ENCODE measurements at regions of chr6 and their contacts with region 1.

Region 1: GRCh38 chr6:82363351-82364086 is at the start of gene TPBG:
- DNase-seq: peak; percentile 66 to 68
- H3K4me3 ChIP-seq: peak within 1 kb of the TSS; percentile 62
- H3K4me3 Mint-ChIP-seq: peak within 1 kb of the TSS; percentile 85
- H3K27ac Mint-ChIP-seq: peak within 1 kb of the TSS; percentile 54
- H3K4me1 ChIP-seq: no peaks in the 10 kb centered on the region; the same call in 1 of the 2 replicates
- H3K4me1 Mint-ChIP-seq: peaks cover 8% of the 10 kb centered on the region
- H3K27me3 ChIP-seq: no peaks in the 10 kb centered on the region; the same call in 1 of the 2 replicates
- H3K27me3 Mint-ChIP-seq: peaks cover 23% of the 10 kb centered on the region
- CTCF ChIP-seq: peak in 1 of 2 experiments; percentile 45
- total RNA-seq, gene TPBG: 4.0 and 4.3 TPM in 2 replicates

Region 2: DNA sequence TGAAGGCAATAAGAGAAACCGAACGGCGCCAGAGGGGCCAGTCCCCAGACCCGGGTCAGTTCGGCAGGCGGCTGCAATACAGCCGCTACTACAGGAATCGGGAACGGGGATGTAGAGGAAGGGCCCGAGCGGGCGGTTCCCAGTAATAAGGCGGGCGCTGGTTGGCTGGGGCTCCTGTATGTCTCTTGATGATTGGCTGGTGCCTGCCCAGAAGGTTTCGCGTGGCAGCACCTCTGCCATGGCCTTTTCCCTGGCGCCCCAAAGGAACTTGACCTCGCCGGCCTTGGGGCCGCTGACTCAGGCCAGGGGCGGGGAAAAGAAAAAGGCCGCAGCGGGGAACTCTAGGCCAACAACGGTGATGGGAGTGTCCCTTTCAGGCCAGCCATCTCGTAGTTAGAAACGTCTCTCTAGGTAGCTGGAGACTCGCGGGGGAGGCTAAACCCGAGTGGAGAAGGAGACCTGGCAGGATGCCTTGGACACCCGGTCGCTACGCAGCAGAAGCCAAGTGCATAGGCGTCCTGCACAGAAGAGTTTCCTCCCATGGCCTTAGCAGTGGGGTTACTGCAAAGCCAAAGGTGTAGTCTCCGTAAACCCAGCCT is 115.8 kb before region 1 on chr6 and contains the start of gene IBTK:
- CTCF ChIA-PET with region 1: no interaction called
- POLR2A ChIA-PET with region 1: no interaction called
- intact Hi-C with region 1: loop called (anchors 5 kb)
- DNase-seq: peak; percentile 95 to 97
- H3K4me3 ChIP-seq: peak within 1 kb of the TSS; percentile 74
- H3K4me3 Mint-ChIP-seq: peak within 1 kb of the TSS; percentile 90
- H3K27ac Mint-ChIP-seq: peak within 1 kb of the TSS; percentile 96
- H3K4me1 ChIP-seq: peaks cover 28% of the 10 kb centered on the region
- H3K4me1 Mint-ChIP-seq: peaks cover 20% of the 10 kb centered on the region
- H3K27me3 ChIP-seq: no peaks in the 10 kb centered on the region
- H3K27me3 Mint-ChIP-seq: no peaks in the 10 kb centered on the region
- CTCF ChIP-seq: no peak
- total RNA-seq, gene IBTK: 29.4 and 30.3 TPM in 2 replicates

Region 3: GRCh38 chr6:82348130-82348529 is 15.4 kb before region 1 on chr6:
- CTCF ChIA-PET with region 1: interaction called, 10 read pairs
- POLR2A ChIA-PET with region 1: no interaction called
- intact Hi-C with region 1: no loop called
- DNase-seq: peak in 1 of 2 experiments; percentile 8
- H3K4me3 ChIP-seq: no peak overlapping the region
- H3K4me3 Mint-ChIP-seq: no peak overlapping the region
- H3K27ac Mint-ChIP-seq: no peak overlapping the region
- H3K4me1 ChIP-seq: no peaks in the 10 kb centered on the region
- H3K4me1 Mint-ChIP-seq: no peaks in the 10 kb centered on the region
- H3K27me3 ChIP-seq: 0 out of 2 replicates have a peak, but pooled peaks cover 1% of the 10 kb centered on the region
- H3K27me3 Mint-ChIP-seq: peaks cover 6% of the 10 kb centered on the region
- CTCF ChIP-seq: no peak

Region 4: GRCh38 chr6:82441066-82441855 is 77.7 kb after region 1 on chr6:
- CTCF ChIA-PET with region 1: no interaction called
- POLR2A ChIA-PET with region 1: no interaction called
- intact Hi-C with region 1: no loop called
- DNase-seq: no peak
- H3K4me3 ChIP-seq: no peak overlapping the region
- H3K4me3 Mint-ChIP-seq: no peak overlapping the region
- H3K27ac Mint-ChIP-seq: no peak overlapping the region
- H3K4me1 ChIP-seq: no peaks in the 10 kb centered on the region
- H3K4me1 Mint-ChIP-seq: no peaks in the 10 kb centered on the region
- H3K27me3 ChIP-seq: no peaks in the 10 kb centered on the region
- H3K27me3 Mint-ChIP-seq: peaks cover 12% of the 10 kb centered on the region
- CTCF ChIP-seq: no peak

Region 5: DNA sequence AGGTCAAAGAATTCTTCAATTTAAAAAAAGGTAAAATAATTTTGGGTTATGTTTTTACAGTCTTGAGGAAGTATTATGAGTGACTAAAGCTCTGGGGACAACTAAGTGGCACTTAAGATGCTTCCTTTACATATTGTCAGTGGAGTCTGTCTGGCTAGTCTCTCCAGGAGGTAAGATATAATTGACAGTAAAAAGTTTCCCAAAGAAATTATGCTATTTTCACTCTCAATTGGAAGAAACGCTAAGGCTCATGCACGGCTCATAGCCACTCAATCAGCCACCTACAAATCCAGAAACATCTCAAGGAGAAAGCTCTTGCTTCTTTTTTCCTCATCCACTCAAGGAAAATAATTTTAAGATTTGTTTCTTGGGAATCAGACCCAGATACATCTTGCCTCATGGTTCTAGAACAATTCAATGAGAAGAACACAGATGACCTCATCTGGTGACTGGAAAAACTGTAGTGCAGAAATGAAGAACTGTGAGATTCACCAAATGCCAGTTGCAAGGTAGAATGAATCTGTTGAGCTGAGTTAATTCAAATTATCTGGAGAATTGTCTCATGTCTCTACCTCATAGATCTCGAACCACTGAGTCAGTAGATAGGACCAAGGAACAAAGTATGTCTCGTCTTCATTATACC is 253.0 kb after region 1 on chr6:
- CTCF ChIA-PET with region 1: no interaction called
- POLR2A ChIA-PET with region 1: no interaction called
- intact Hi-C with region 1: loop called (anchors 10 kb)
- DNase-seq: no peak
- H3K4me3 ChIP-seq: no peak overlapping the region
- H3K4me3 Mint-ChIP-seq: no peak overlapping the region
- H3K27ac Mint-ChIP-seq: no peak overlapping the region
- H3K4me1 ChIP-seq: no peaks in the 10 kb centered on the region
- H3K4me1 Mint-ChIP-seq: no peaks in the 10 kb centered on the region
- H3K27me3 ChIP-seq: no peaks in the 10 kb centered on the region
- H3K27me3 Mint-ChIP-seq: no peaks in the 10 kb centered on the region
- CTCF ChIP-seq: no peak

Measured in Caco-2 (cell line).